A673 (cell line): ENCODE measurements at regions of chr6 and their contacts with region 1.

Region 1: GRCh38 chr6:130500693-130501092 is 134.9 kb downstream of the TMEM200A start:
- DNase-seq: peak; percentile 92
- H3K4me3 ChIP-seq: no peak overlapping the region
- H3K27ac ChIP-seq: peak overlapping the region; percentile 34
- H3K4me1 ChIP-seq: peaks cover 36% of the 10 kb centered on the region
- H3K27me3 ChIP-seq: no peaks in the 10 kb centered on the region
- CTCF ChIP-seq: no peak

Region 2: GRCh38 chr6:130396722-130397121 is 104.0 kb before region 1 on chr6:
- CTCF ChIA-PET with region 1: no interaction called
- POLR2A ChIA-PET with region 1: interaction called, 11 read pairs
- intact Hi-C with region 1: no loop called
- DNase-seq: no peak
- H3K4me3 ChIP-seq: no peak overlapping the region
- H3K27ac ChIP-seq: no peak overlapping the region
- H3K4me1 ChIP-seq: no peaks in the 10 kb centered on the region
- H3K27me3 ChIP-seq: no peaks in the 10 kb centered on the region
- CTCF ChIP-seq: no peak